PC-3 (cell line): ENCODE measurements at regions of chr19 and their contacts with region 1.

Region 1: GRCh38 chr19:18388100-18388959 is 2.4 kb downstream of the GDF15 start:
- DNase-seq: peak; percentile 83
- ATAC-seq: peak; percentile 45
- H3K4me3 ChIP-seq: peak overlapping the region; percentile 61
- H3K27ac ChIP-seq: no peak overlapping the region
- H3K4me1 ChIP-seq: peaks cover 6% of the 10 kb centered on the region
- H3K27me3 ChIP-seq: no peaks in the 10 kb centered on the region
- CTCF ChIP-seq: peak; percentile 92

Region 2: DNA sequence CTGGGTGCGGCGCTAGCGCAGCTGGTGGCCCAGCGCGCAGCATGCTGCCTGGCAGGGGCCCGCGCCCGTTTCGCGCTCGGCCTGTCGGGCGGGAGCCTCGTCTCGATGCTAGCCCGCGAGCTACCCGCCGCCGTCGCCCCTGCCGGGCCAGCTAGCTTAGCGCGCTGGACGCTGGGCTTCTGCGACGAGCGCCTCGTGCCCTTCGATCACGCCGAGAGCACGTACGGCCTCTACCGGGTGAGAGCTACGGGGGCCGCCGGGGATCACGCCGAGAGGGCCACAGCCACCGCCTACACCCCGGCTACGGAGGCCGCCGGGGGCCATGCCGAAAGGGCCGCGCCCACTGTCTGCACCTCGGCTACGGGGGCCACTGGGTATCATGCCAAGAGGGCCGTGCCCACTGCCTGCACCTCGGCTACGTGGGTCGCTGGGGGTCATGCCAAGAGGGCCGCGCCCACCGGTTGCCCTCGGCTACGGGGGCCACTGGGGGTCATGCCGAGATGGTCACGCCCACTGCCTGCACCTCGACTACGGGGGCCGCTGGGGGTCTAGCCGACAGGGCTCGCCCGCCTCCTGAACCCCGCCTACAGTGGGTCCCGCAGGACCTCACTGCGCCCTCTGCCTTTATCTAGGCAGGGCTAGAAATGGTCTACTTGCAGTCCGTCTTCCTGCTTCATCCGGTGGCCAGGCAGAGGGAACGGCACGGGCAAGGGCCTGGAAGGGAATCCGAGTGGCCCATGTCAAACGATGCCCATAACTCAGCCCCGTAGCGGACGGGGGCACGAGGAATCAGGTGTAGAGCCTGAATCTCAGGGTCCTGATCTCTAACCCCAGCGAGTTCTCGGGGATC is 876.4 kb before region 1 on chr19:
- CTCF ChIA-PET with region 1: no interaction called
- POLR2A ChIA-PET with region 1: interaction called, 16 read pairs
- intact Hi-C with region 1: no loop called
- DNase-seq: peak; percentile 60
- ATAC-seq: peak; percentile 33
- H3K4me3 ChIP-seq: peak overlapping the region; percentile 91
- H3K27ac ChIP-seq: peak overlapping the region; percentile 79
- H3K4me1 ChIP-seq: peaks cover 22% of the 10 kb centered on the region
- H3K27me3 ChIP-seq: no peaks in the 10 kb centered on the region
- CTCF ChIP-seq: peak; percentile 27; the same call in 1 of the 2 replicates

Region 3: GRCh38 chr19:18091217-18091608 is 297.1 kb before region 1 on chr19:
- CTCF ChIA-PET with region 1: no interaction called
- POLR2A ChIA-PET with region 1: no interaction called
- intact Hi-C with region 1: no loop called
- DNase-seq: no peak
- ATAC-seq: no peak
- H3K4me3 ChIP-seq: no peak overlapping the region
- H3K27ac ChIP-seq: no peak overlapping the region
- H3K4me1 ChIP-seq: no peaks in the 10 kb centered on the region
- H3K27me3 ChIP-seq: no peaks in the 10 kb centered on the region
- CTCF ChIP-seq: no peak

Region 4: DNA sequence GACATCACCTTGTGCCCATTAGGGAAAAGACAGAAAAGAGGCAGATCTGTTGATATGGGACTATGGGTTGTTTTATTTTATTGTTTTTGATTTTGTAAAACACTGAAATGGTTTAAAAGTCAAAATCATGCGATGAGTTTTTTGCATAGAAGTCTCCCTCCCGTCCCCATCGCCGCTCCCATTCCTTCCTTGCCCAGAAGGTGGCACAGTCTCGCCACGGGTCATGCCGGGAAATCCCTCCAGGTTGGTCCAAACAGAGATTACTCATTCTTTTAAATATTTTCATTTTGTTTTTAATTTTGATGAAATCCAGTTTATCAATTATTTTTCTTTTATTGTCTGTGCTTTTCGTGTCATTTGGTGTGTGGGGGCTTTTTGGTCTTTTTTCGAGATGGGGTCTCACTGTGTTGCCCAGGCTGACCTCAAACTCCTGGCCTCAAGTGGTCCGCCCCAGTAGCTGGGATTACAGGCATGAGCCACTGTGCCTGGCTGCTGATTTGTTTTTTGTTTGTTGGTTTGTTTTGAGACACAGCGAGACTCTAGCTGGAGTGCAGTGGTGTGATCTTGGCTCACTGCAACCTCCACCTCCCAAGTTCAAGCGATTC is 38.7 kb before region 1 on chr19:
- CTCF ChIA-PET with region 1: interaction called, 4 read pairs
- POLR2A ChIA-PET with region 1: no interaction called
- intact Hi-C with region 1: loop called (anchors 1 kb)
- DNase-seq: peak; percentile 79
- ATAC-seq: peak; percentile 84
- H3K4me3 ChIP-seq: no peak overlapping the region
- H3K27ac ChIP-seq: no peak overlapping the region
- H3K4me1 ChIP-seq: no peaks in the 10 kb centered on the region
- H3K27me3 ChIP-seq: no peaks in the 10 kb centered on the region
- CTCF ChIP-seq: peak; percentile 92

Region 5: GRCh38 chr19:18373892-18374629 is 14.3 kb before region 1 on chr19:
- CTCF ChIA-PET with region 1: interaction called, 14 read pairs
- POLR2A ChIA-PET with region 1: no interaction called
- intact Hi-C with region 1: no loop called
- DNase-seq: peak; percentile 90
- ATAC-seq: peak; percentile 93
- H3K4me3 ChIP-seq: no peak overlapping the region
- H3K27ac ChIP-seq: peak overlapping the region; percentile 76
- H3K4me1 ChIP-seq: peaks cover 38% of the 10 kb centered on the region
- H3K27me3 ChIP-seq: no peaks in the 10 kb centered on the region
- CTCF ChIP-seq: no peak

Region 6: DNA sequence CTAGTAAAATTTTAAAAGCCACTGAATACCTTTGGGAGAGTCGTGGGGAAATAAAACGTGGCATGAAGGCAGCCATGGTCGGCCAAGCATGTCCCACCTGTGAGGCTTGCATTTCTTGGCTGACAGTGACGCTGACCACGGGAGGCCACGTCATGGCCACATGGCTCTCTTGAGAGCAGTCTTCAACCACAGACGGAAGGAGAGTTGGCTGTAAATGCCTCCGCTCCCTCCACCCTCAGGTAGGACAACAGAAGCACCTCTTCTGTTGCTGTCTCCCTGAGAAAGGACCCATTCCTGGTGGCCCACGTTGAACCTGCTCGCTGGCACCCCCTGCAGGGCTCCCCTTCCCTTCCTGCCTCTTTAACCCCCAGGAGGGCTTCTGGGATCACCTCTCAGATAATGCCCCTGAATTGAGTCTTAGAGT is 19.7 kb after region 1 on chr19:
- CTCF ChIA-PET with region 1: interaction called, 3 read pairs
- POLR2A ChIA-PET with region 1: no interaction called
- intact Hi-C with region 1: loop called (anchors 1 kb)
- DNase-seq: peak; percentile 41
- ATAC-seq: no peak
- H3K4me3 ChIP-seq: no peak overlapping the region
- H3K27ac ChIP-seq: no peak overlapping the region
- H3K4me1 ChIP-seq: no peaks in the 10 kb centered on the region
- H3K27me3 ChIP-seq: no peaks in the 10 kb centered on the region
- CTCF ChIP-seq: peak; percentile 62